ENCODE measurements at regions of chr7 and their contacts with region 1.

Region 1: GRCh38 chr7:126727925-126728391 is 524.8 kb downstream of the GRM8 start:
- DNase-seq: peak; percentile 44
- H3K4me3 ChIP-seq: no peak overlapping the region
- H3K27ac ChIP-seq: peak overlapping the region; percentile 42
- H3K4me1 ChIP-seq: peaks cover 5% of the 10 kb centered on the region
- H3K27me3 ChIP-seq: no peaks in the 10 kb centered on the region
- CTCF ChIP-seq: no peak
- POLR2A ChIP-seq: no peak

Region 2: DNA sequence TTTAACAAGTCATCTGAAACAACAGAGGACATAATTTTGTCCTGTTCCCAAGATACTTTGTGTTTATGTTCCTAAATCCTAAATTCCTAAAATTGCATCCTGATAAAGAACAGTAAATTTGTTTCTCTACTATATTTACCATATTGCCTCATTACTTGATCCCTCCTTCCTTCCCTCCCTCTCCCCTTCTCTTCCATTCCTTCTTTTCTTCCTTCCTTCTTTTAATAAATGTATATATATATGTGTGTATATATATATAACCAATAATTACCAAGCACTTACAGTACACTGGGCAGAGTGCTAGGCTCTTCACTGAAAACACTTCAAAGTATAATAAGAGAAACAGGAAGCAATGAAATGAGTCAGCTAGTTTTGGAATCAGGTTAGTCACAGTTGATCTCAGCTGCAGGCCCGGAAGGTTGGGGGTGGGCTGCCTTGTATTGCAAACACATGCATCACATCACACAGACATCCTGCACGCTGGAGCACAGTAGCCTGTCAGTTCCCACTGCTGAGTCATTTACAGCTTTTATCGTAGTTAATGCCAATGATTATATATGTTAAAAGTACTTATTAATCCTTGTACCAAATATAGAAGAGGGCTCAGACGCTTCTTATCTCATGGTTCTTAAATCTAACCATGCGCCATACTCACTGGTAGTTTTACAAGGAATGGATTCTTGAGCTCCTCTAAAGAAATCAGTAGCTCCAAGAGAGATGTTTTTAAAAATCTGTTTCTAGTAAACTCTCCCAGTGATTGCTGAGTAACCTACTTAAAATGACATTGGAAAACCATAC is 27.0 kb before region 1 on chr7:
- CTCF ChIA-PET with region 1: interaction called, 7 read pairs
- POLR2A ChIA-PET with region 1: no interaction called
- dilution Hi-C with region 1: no loop called
- intact Hi-C with region 1: loop called (anchors 1 kb)
- DNase-seq: peak; percentile 98
- H3K4me3 ChIP-seq: peak overlapping the region in 1 of 3 experiments; percentile 26
- H3K27ac ChIP-seq: peak overlapping the region; percentile 89
- H3K4me1 ChIP-seq: peaks cover 21% of the 10 kb centered on the region
- H3K27me3 ChIP-seq: no peaks in the 10 kb centered on the region
- CTCF ChIP-seq: no peak
- POLR2A ChIP-seq: peak; percentile 46

Region 3: DNA sequence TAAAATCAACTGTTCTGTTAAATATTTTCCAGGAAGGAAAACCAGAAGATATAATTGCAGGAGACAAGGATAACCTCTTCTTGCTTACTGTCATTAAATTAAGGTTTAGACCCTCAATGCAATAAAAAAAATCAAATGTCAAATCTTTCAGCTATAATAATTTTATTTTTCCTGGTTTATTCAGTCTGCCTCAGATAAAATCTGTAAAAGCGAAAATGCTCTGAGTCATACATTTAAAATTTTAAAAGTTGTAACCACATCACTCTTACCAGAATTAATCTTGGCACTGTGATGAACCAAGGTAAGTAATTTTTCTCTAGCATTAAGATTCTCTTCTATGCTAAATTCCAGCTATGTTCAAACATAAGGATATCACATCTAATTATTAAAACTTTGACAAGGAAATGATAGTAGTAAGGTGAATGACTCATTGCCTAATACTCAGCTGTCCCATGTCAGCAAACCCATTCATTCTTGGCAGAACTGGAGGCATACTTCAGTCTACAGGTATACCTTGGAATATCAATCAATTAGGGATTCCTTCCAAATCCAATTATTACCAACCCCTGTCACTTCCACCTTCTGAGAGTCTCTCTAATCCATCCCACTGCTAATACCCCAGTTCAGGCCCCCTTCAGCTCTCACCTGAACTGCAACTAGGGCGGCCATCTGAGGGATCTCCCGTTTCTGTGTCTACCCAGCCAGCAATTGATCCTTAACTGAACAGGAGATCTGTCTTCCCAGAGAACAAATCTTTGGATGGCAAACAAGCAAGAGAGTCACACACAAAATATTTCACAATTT is 90.6 kb after region 1 on chr7:
- CTCF ChIA-PET with region 1: no interaction called
- POLR2A ChIA-PET with region 1: no interaction called
- dilution Hi-C with region 1: no loop called
- intact Hi-C with region 1: no loop called
- DNase-seq: no peak
- H3K4me3 ChIP-seq: no peak overlapping the region
- H3K27ac ChIP-seq: no peak overlapping the region
- H3K4me1 ChIP-seq: no peaks in the 10 kb centered on the region
- H3K27me3 ChIP-seq: no peaks in the 10 kb centered on the region
- CTCF ChIP-seq: no peak
- POLR2A ChIP-seq: no peak

Measured in endothelial cell of umbilical vein (primary cell).